ENCODE measurements at regions of chr17 and their contacts with region 1.

Region 1: DNA sequence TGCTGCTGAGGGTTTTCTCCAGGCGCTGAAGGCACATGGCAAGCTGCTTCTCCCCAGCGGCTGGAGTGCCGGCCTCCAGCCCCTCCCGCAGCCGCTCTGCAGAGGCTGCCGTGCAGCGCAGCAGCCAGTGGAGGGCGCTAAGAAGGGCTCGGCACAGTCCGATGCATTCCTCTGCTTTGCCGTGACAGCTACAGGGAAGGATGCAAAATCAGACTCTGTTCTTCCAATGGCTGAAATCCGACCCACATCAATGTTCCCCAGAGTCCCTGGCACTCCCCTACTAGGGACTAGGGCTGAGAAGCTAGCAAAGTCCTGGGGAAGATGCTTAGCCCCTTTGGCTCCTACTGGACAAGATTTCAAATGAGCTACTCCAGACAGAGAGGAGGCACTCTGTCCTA is 19.0 kb downstream of the MED24 start:
- DNase-seq: peak; percentile 71 to 77 (median 74)
- ATAC-seq: peak; percentile 99
- H3K4me3 ChIP-seq: no peak overlapping the region
- H3K27ac ChIP-seq: no peak overlapping the region
- H3K4me1 ChIP-seq: peaks cover 0 to 4% of the 10 kb centered on the region in 2 experiments; a peak in 1 of 5 replicates
- H3K27me3 ChIP-seq: no peaks in the 10 kb centered on the region
- CTCF ChIP-seq: peak; percentile 84 to 94 (median 93)
- EP300 ChIP-seq: no peak
- POLR2A ChIP-seq: no peak
- RAD21 ChIP-seq: peak in 1 of 2 experiments; percentile 66; a peak in 3 of 4 replicates

Region 2: DNA sequence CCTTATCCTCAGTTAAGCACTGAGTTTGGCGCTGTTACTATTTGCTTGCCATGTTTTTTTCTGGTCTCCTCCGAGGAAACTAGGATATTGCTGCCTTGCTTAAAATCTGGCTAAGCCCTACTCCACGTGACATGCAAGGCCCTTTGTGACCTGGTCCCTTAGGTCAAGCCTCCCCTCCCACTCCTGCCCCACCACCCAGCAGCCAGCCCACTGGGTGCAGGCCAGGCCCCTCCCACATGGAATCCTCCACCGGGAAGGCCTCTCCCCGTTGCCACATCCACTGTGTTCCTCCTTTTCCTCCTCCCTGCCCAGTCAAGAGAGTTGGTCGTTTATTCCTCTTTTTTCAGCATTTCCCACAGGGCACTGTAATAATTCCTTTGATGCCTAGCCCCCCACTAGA is 38.4 kb before region 1 on chr17:
- CTCF ChIA-PET with region 1: no interaction called
- POLR2A ChIA-PET with region 1: no interaction called
- in situ Hi-C with region 1: no loop called
- intact Hi-C with region 1: no loop called
- DNase-seq: peak in 2 of 4 experiments; percentile 52 to 53
- ATAC-seq: no peak
- H3K4me3 ChIP-seq: no peak overlapping the region
- H3K27ac ChIP-seq: no peak overlapping the region
- H3K4me1 ChIP-seq: peaks cover 0 to 3% of the 10 kb centered on the region in 2 experiments; a peak in 1 of 5 replicates
- H3K27me3 ChIP-seq: no peaks in the 10 kb centered on the region
- CTCF ChIP-seq: no peak
- EP300 ChIP-seq: no peak
- POLR2A ChIP-seq: no peak
- RAD21 ChIP-seq: no peak

Region 3: GRCh38 chr17:40086150-40087044 is 51.2 kb after region 1 on chr17:
- CTCF ChIA-PET with region 1: no interaction called
- POLR2A ChIA-PET with region 1: interaction called, 3 read pairs
- in situ Hi-C with region 1: loop called (anchors 5 kb)
- intact Hi-C with region 1: no loop called
- DNase-seq: peak; percentile 77 to 89 (median 84)
- ATAC-seq: peak; percentile 94
- H3K4me3 ChIP-seq: no peak overlapping the region
- H3K27ac ChIP-seq: no peak overlapping the region; the same call in 2 of the 3 replicates
- H3K4me1 ChIP-seq: peaks cover 0 to 17% of the 10 kb centered on the region in 2 experiments; a peak in 2 of 5 replicates
- H3K27me3 ChIP-seq: no peaks in the 10 kb centered on the region
- CTCF ChIP-seq: peak; percentile 77 to 90 (median 85)
- EP300 ChIP-seq: no peak
- POLR2A ChIP-seq: no peak
- RAD21 ChIP-seq: peak; percentile 72 to 85

Region 4: DNA sequence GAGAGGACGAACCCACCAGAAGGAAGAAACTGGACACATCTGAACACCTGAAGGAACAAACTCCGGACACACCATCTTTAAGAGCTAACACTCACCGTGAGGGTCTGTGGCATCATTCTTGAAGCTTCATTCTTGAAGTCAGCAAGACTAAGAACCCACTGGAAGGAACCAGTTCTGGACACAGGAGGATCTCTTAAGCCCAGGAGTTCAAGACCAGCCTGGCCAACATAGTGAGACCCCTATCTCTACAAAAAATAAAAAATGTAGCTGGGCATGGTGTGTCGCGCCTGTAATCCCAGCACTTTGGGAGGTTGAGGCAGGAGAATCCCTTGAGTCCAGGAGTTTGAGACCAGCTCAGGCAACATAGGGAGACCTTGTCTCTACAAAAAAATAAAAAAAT is 163.4 kb after region 1 on chr17:
- CTCF ChIA-PET with region 1: no interaction called
- POLR2A ChIA-PET with region 1: no interaction called
- in situ Hi-C with region 1: no loop called
- intact Hi-C with region 1: no loop called
- DNase-seq: no peak
- ATAC-seq: no peak
- H3K4me3 ChIP-seq: no peak overlapping the region
- H3K27ac ChIP-seq: no peak overlapping the region
- H3K4me1 ChIP-seq: peaks cover 3 to 11% of the 10 kb centered on the region in 2 experiments; a peak in 3 of 5 replicates
- H3K27me3 ChIP-seq: no peaks in the 10 kb centered on the region; a peak in 1 of 5 replicates
- CTCF ChIP-seq: no peak
- EP300 ChIP-seq: no peak
- POLR2A ChIP-seq: no peak
- RAD21 ChIP-seq: no peak

Measured in K562 (cell line).